CD4-positive, alpha-beta memory T cell (primary cell): ENCODE measurements at regions of chr19 and their contacts with region 1.

Region 1: GRCh38 chr19:52028027-52028779 is at the start of gene ZNF614:
- DNase-seq: peak; percentile 85 to 93 (median 89)
- H3K4me3 ChIP-seq: peak within 1 kb of the TSS; percentile 77 to 96
- H3K4me3 Mint-ChIP-seq: peak within 1 kb of the TSS; percentile 90 to 99 (median 94)
- H3K27ac ChIP-seq: peak within 1 kb of the TSS; percentile 89
- H3K27ac Mint-ChIP-seq: peak within 1 kb of the TSS; percentile 91 to 99 (median 96)
- H3K4me1 ChIP-seq: peaks cover 18% of the 10 kb centered on the region
- H3K4me1 Mint-ChIP-seq: peaks cover 16 to 33% (median 23%) of the 10 kb centered on the region in 4 donors
- H3K27me3 ChIP-seq: no peaks in the 10 kb centered on the region
- H3K27me3 Mint-ChIP-seq: no peaks in the 10 kb centered on the region
- total RNA-seq, gene ZNF614: 12.3 TPM

Region 2: GRCh38 chr19:51948975-51949374 is 79.2 kb before region 1 on chr19:
- CTCF ChIA-PET with region 1: no interaction called
- POLR2A ChIA-PET with region 1: no interaction called
- intact Hi-C with region 1: no loop called
- DNase-seq: no peak
- H3K4me3 ChIP-seq: no peak overlapping the region
- H3K4me3 Mint-ChIP-seq: no peak overlapping the region
- H3K27ac ChIP-seq: no peak overlapping the region
- H3K27ac Mint-ChIP-seq: no peak overlapping the region
- H3K4me1 ChIP-seq: no peaks in the 10 kb centered on the region
- H3K4me1 Mint-ChIP-seq: no peaks in the 10 kb centered on the region
- H3K27me3 ChIP-seq: no peaks in the 10 kb centered on the region
- H3K27me3 Mint-ChIP-seq: no peaks in the 10 kb centered on the region

Region 3: DNA sequence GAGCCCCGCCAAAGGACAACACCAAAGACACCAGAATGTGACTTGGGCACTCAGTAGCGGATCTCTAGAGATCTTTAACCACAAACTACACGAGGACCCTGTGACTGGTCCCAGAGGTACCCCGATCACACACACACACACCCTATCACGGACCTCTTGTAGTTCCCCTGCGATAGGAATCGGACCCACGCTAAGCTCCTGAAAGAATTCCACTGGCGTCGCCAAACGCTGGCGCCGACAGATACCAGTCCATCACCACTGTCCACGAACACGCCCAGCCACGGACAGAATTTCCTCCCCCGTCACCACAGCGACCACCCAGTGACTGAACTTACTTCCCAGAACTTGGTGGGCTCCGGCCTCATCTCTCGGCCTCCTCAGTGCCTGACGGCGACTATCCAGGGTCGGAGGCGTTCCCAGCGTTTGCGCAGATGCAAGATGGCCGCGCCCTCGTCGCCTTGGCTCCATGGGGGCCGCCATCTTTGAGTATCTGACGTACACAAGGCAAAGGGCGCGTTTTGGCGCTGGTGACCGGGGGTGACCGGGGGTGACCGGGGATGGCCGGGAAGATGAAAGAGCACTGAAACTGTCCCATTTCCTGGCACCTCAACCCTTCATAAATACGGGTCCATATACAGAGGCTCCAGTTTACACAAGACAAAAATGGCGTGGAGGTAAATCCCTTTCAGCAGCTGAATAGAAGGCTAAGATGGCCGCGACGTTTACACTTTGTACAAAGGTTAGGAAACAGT is 20.2 kb before region 1 on chr19 and contains the start of gene ZNF615:
- CTCF ChIA-PET with region 1: interaction called, 5 read pairs
- POLR2A ChIA-PET with region 1: interaction called, 19 read pairs
- intact Hi-C with region 1: loop called (anchors 1 kb)
- DNase-seq: peak; percentile 83 to 92 (median 85)
- H3K4me3 ChIP-seq: peak within 1 kb of the TSS; percentile 67 to 85
- H3K4me3 Mint-ChIP-seq: peak within 1 kb of the TSS; percentile 94 to 98 (median 98)
- H3K27ac ChIP-seq: peak within 1 kb of the TSS; percentile 78
- H3K27ac Mint-ChIP-seq: peak within 1 kb of the TSS; percentile 86 to 99 (median 98)
- H3K4me1 ChIP-seq: peaks cover 8% of the 10 kb centered on the region
- H3K4me1 Mint-ChIP-seq: peaks cover 14 to 17% (median 16%) of the 10 kb centered on the region in 4 donors
- H3K27me3 ChIP-seq: no peaks in the 10 kb centered on the region
- H3K27me3 Mint-ChIP-seq: no peaks in the 10 kb centered on the region
- total RNA-seq, gene ZNF615: 21.5 to 22.4 TPM

Region 4: GRCh38 chr19:52176366-52176970 is 148.3 kb after region 1 on chr19:
- CTCF ChIA-PET with region 1: no interaction called
- POLR2A ChIA-PET with region 1: no interaction called
- intact Hi-C with region 1: no loop called
- DNase-seq: no peak
- H3K4me3 ChIP-seq: no peak overlapping the region
- H3K4me3 Mint-ChIP-seq: no peak overlapping the region
- H3K27ac ChIP-seq: no peak overlapping the region
- H3K27ac Mint-ChIP-seq: peak overlapping the region in 1 of 7 donors; percentile 9
- H3K4me1 ChIP-seq: peaks cover 9% of the 10 kb centered on the region
- H3K4me1 Mint-ChIP-seq: peaks cover 6 to 10% (median 8%) of the 10 kb centered on the region in 4 donors
- H3K27me3 ChIP-seq: no peaks in the 10 kb centered on the region
- H3K27me3 Mint-ChIP-seq: no peaks in the 10 kb centered on the region

Region 5: DNA sequence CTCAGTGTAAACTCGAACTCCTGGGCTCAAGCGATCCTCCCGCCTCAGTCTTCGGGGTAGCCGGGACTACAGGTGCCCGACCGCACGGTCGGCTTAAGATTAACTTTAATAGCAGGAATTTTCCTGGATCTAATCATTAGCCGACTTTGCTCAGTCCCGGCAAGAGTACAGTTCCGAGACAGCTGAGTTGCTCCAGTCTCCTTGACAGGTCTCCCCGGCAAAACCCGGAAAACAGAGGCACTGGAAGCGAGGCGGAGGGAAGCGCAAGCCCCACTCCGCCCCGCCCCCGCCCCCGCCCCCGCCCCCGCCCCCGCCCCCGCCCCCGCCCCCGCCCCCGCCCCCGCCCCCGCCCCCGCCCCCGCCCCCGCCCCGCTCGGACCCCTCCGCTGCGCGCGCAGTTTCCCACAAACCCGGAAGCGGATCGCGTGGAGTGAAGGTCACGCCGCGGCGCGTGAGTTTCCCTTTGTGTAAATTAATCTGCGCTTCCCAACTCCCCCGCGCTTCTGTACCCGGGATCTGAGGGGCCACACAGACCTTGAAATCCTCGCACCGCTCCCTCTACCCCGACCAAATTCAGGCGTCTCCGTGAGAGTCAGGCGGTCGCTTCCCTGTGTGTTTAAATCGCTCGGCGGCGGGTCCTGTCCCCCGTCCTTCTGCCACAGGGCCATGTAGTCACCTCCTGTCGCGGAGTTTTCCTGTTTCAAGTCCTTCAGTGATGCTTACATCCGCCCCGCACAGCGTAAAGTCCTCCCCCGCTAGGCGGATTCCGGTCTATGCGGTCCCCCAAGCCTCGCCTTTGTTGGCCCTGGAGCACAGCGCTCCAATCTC is 268.8 kb after region 1 on chr19 and contains the start of gene ZNF480:
- CTCF ChIA-PET with region 1: no interaction called
- POLR2A ChIA-PET with region 1: no interaction called
- intact Hi-C with region 1: loop called (anchors 10 kb)
- DNase-seq: peak; percentile 87 to 89 (median 87)
- H3K4me3 ChIP-seq: peak within 1 kb of the TSS; percentile 89 to 92
- H3K4me3 Mint-ChIP-seq: peak within 1 kb of the TSS; percentile 94 to 99 (median 96)
- H3K27ac ChIP-seq: peak within 1 kb of the TSS; percentile 72
- H3K27ac Mint-ChIP-seq: peak within 1 kb of the TSS; percentile 97 to 100 (median 98)
- H3K4me1 ChIP-seq: peaks cover 16% of the 10 kb centered on the region
- H3K4me1 Mint-ChIP-seq: peaks cover 17 to 24% (median 19%) of the 10 kb centered on the region in 4 donors
- H3K27me3 ChIP-seq: no peaks in the 10 kb centered on the region
- H3K27me3 Mint-ChIP-seq: peaks cover 0 to 3% of the 10 kb centered on the region in 2 donors
- total RNA-seq, gene ZNF480: 26.7 to 26.9 TPM